SK-N-SH (cell line): ENCODE measurements at regions of chr2 and their contacts with region 1.

Region 1: DNA sequence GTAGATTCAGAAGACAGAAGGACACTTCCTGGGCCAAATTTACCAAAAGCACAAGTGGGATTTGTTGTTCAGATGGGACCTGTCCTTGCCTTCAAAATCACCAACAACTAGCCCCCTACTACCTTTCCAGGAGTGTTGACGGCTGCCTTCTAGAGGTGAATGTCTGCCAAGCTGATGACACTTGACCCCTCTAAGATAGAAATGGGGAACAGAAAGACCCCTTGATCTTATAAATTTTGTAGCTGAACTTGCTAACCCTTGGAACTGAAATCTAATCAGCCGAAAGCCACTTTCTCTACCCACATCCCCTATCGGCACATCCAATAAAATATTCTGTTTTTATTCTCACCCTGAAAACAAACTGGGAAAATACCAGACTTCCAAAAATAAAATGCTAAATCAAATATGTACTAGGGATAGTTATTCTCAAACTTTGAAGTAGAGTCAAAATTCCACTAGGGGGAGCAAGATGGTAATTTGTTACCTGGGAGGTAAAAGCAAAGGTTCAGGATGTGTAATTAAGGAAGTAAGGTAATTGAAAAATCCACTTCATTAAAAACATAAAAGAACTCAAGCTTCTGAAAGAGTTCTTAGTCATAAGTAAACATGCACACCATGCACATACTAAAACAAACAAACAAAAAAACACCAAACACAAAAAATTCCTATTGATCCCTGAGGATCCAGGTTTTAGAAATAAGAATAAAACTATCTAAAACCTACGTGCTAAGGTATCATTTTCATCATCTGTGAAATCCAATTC is 119.2 kb downstream of the ANKRD44 start:
- DNase-seq: peak; percentile 48
- H3K4me3 ChIP-seq: no peak overlapping the region; a peak in 1 of 4 replicates
- H3K27ac ChIP-seq: peak overlapping the region in 1 of 2 experiments; percentile 69; a peak in 2 of 4 replicates
- H3K4me1 ChIP-seq: peaks cover 0 to 27% of the 10 kb centered on the region in 2 experiments; a peak in 2 of 4 replicates
- H3K27me3 ChIP-seq: no peaks in the 10 kb centered on the region
- CTCF ChIP-seq: peak; percentile 83
- EP300 ChIP-seq: no peak
- RAD21 ChIP-seq: peak; percentile 89

Region 2: GRCh38 chr2:197168705-197169104 is 22.7 kb before region 1 on chr2:
- CTCF ChIA-PET with region 1: interaction called, 14 read pairs
- POLR2A ChIA-PET with region 1: no interaction called
- DNase-seq: peak; percentile 70
- H3K4me3 ChIP-seq: no peak overlapping the region
- H3K27ac ChIP-seq: peak overlapping the region in 1 of 2 experiments; percentile 3; a peak in 1 of 4 replicates
- H3K4me1 ChIP-seq: peaks cover 5 to 13% of the 10 kb centered on the region in 2 experiments; a peak in 3 of 4 replicates
- H3K27me3 ChIP-seq: no peaks in the 10 kb centered on the region
- CTCF ChIP-seq: peak; percentile 67
- EP300 ChIP-seq: no peak
- RAD21 ChIP-seq: peak; percentile 74

Region 3: GRCh38 chr2:197201874-197202273 is 10.5 kb after region 1 on chr2:
- CTCF ChIA-PET with region 1: interaction called, 13 read pairs
- POLR2A ChIA-PET with region 1: no interaction called
- DNase-seq: no peak
- H3K4me3 ChIP-seq: no peak overlapping the region
- H3K27ac ChIP-seq: no peak overlapping the region
- H3K4me1 ChIP-seq: peaks cover 0 to 34% of the 10 kb centered on the region in 2 experiments; a peak in 2 of 4 replicates
- H3K27me3 ChIP-seq: no peaks in the 10 kb centered on the region
- CTCF ChIP-seq: no peak
- EP300 ChIP-seq: no peak
- RAD21 ChIP-seq: no peak

Region 4: GRCh38 chr2:197216361-197216979 is 25.1 kb after region 1 on chr2:
- CTCF ChIA-PET with region 1: interaction called, 12 read pairs
- POLR2A ChIA-PET with region 1: no interaction called
- DNase-seq: no peak
- H3K4me3 ChIP-seq: no peak overlapping the region
- H3K27ac ChIP-seq: peak overlapping the region; percentile 34 to 96; a peak in 3 of 4 replicates
- H3K4me1 ChIP-seq: peaks cover 16 to 31% of the 10 kb centered on the region in 2 experiments; a peak in 3 of 4 replicates
- H3K27me3 ChIP-seq: no peaks in the 10 kb centered on the region
- CTCF ChIP-seq: no peak
- EP300 ChIP-seq: no peak
- RAD21 ChIP-seq: no peak

Region 5: DNA sequence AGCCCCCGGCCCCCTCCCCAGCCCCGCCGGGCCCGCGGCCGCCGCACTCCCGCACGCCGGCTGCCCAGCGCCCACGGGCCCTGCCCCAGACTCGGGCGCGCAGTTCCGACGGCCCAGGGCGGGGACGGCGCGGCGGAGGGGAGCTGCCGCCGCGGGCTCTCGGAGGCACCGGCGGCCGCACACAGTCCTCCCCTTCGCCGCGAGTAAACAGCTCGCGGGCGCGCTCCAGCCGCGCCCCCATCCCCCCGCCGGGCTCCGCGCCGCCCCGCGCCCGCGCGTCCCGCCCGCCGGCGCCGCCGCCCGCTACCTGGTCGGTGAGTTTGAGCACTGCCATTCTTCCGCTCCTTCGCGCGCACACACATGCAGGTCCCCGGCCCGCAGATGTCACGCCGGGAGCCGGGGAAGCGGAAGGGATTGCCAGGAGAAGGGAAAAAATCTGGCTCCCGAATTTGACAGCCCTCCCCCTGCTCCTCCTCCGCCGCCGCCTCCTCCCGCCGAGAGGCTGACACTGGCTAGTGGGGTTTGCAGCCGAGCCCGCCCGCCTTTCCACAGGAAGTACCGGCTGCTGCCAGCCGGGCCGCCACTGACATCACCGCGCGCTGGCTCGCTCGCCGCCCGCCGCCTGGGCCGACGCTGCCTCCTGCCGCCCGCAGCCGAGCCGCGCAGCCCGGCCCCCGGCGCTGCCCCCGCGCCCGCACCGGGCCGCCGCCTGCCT is 119.1 kb after region 1 on chr2 and contains the start of gene ANKRD44:
- CTCF ChIA-PET with region 1: interaction called, 55 read pairs
- POLR2A ChIA-PET with region 1: no interaction called
- DNase-seq: peak; percentile 95
- H3K4me3 ChIP-seq: peak within 1 kb of the TSS; percentile 70 to 73
- H3K27ac ChIP-seq: peak within 1 kb of the TSS in 1 of 2 experiments; percentile 94; a peak in 2 of 4 replicates
- H3K4me1 ChIP-seq: peaks cover 7 to 36% of the 10 kb centered on the region in 2 experiments; a peak in 3 of 4 replicates
- H3K27me3 ChIP-seq: no peaks in the 10 kb centered on the region
- CTCF ChIP-seq: peak; percentile 34
- EP300 ChIP-seq: no peak
- RAD21 ChIP-seq: peak; percentile 66
- polyA plus RNA-seq, gene ANKRD44: 12.3 and 12.5 TPM in 2 replicates